Body of pancreas (tissue), 4 donors: ENCODE measurements at regions of chr3 and their contacts with region 1.

Region 1: DNA sequence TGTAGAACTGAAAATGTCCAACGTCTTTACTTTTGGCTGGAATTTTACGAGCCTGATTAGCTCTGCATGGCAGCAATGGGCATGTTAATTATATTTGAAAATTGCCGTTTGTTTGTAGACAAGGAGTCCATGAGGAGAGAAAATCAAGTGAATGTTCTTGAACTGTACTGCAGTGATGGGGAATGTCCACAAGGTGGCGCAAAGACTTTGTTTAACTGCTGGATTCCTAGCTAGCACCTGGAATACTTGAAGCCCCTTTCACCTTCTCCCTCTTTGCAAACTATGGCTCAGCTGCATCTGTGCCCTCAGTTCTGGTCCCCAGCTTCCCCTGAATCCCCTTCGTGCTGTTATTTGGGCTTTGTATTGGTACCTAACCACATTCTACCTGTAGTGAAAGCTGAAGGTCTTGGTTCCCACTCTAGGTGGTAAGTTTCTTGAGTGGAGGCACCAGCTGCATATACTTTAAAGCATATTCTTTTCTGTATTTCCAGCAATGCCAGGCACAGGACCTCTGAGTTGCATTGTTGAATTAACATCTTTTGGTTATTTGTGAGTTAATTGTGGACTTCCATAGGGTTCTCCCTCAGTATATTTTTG is 25.3 kb downstream of the EXOG start:
- DNase-seq: peak; percentile 71 to 77 (median 72)
- ATAC-seq: peak; percentile 69
- H3K4me3 ChIP-seq: no peak overlapping the region
- H3K27ac ChIP-seq: no peak overlapping the region
- H3K4me1 ChIP-seq: no peaks in the 10 kb centered on the region
- H3K27me3 ChIP-seq: no peaks in the 10 kb centered on the region
- CTCF ChIP-seq: peak; percentile 78 to 86 (median 84)
- POLR2A ChIP-seq: no peak

Region 2: DNA sequence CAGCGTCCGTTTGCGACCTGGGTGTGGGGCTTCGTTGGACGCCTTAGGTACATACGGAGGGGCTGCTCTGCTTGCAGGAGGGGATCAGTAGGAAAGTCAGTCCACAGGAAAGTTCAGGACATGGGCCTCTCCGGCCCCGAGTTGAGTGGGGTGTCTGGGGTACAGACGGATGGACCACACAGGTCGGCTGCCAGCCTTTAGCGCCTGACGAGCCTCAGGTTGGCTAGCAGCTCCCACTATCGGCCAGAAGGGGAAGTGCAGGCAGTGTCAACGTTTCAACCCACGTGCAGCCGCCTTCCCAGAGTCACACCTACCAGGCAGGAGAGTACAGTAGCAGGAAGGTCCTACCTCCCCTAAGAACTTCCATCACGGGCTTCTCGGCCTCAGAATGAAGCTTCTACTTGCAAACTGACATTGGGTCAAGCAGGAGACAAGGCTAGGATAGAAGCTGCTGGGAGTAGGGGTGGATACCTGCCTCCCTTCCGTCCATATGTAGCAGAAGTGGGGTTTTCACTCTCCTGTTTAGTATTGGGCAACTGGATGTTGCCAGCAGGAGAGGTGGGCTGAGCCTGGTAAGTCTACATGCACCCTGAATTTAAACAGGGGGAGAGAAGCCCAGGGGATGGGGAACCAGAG is 129.8 kb after region 1 on chr3:
- intact Hi-C with region 1: loop called (anchors 10 kb)
- DNase-seq: peak; percentile 73 to 76 (median 73)
- ATAC-seq: peak; percentile 64
- H3K4me3 ChIP-seq: no peak overlapping the region
- H3K27ac ChIP-seq: no peak overlapping the region
- H3K4me1 ChIP-seq: peaks cover 22% of the 10 kb centered on the region
- H3K27me3 ChIP-seq: peaks cover 0 to 12% of the 10 kb centered on the region in 2 donors
- CTCF ChIP-seq: peak; percentile 75 to 98 (median 92)
- POLR2A ChIP-seq: no peak

Region 3: DNA sequence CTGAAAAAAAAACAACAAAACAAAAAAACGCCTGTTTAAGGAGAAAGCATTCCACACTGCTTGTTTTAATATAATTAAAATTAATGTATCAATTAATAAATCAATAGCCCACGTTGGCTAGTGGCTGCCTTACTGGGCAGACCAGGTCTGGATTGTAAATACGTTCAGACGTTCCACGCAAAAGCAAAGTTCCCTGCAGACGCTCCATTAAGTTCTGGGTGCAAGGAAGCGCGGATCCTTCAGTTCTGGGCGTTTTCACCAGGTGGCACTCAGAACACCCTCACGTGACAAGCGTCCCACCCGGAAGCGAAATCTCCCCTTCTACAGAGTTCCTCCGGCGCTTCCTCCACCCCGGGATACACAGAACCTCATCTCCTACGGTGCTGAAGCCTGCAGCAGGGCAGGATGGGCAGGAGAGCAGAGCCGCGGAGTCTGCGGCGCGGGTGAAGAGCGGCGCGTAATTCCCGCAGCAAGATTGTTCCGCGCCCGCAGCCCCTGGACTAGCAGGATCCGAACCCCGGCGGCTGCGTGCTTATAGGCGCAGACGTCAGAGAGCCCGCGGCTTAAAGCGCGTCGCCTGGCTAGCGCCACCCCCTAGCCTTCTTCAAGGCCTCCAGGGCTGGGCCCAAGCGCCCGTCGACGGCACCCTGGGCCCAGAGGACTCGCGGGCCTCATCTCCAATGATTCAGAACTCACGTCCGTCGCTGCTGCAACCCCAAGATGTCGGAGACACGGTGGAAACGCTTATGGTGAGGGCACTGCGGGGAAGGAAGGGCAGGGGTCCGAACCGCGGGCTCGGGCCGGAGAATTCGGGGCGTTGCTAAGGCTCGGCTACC is 861.8 kb after region 1 on chr3 and contains the start of gene SLC25A38:
- intact Hi-C with region 1: no loop called
- DNase-seq: peak; percentile 75 to 85 (median 82)
- ATAC-seq: peak; percentile 63
- H3K4me3 ChIP-seq: peak within 1 kb of the TSS; percentile 32 to 75
- H3K27ac ChIP-seq: peak within 1 kb of the TSS; percentile 95 to 98 (median 96)
- H3K4me1 ChIP-seq: peaks cover 81% of the 10 kb centered on the region
- H3K27me3 ChIP-seq: no peaks in the 10 kb centered on the region
- CTCF ChIP-seq: peak in 4 of 7 experiments; percentile 20 to 48 (median 40)
- POLR2A ChIP-seq: peak in 2 of 3 donors; percentile 29 to 37
- total RNA-seq, gene SLC25A38: 17.5 to 28.8 TPM